Breast epithelium (tissue), 4 donors: ENCODE measurements at regions of chr3 and their contacts with region 1.

Region 1: GRCh38 chr3:133384331-133385027 is 15.4 kb upstream of the BFSP2 start:
- DNase-seq: peak; percentile 42 to 61
- H3K4me3 ChIP-seq: peak overlapping the region in 1 of 3 donors; percentile 17
- H3K27ac ChIP-seq: no peak overlapping the region
- H3K4me1 ChIP-seq: no peaks in the 10 kb centered on the region
- H3K27me3 ChIP-seq: no peaks in the 10 kb centered on the region
- CTCF ChIP-seq: peak in 2 of 3 donors; percentile 68 to 84
- POLR2A ChIP-seq: no peak

Region 2: GRCh38 chr3:133362539-133362938 is 21.9 kb before region 1 on chr3:
- intact Hi-C with region 1: no loop called
- DNase-seq: no peak
- H3K4me3 ChIP-seq: no peak overlapping the region
- H3K27ac ChIP-seq: no peak overlapping the region
- H3K4me1 ChIP-seq: no peaks in the 10 kb centered on the region
- H3K27me3 ChIP-seq: no peaks in the 10 kb centered on the region
- CTCF ChIP-seq: no peak
- POLR2A ChIP-seq: no peak

Region 3: GRCh38 chr3:133401374-133402135 is 17.1 kb after region 1 on chr3:
- intact Hi-C with region 1: no loop called
- DNase-seq: no peak
- H3K4me3 ChIP-seq: no peak overlapping the region
- H3K27ac ChIP-seq: no peak overlapping the region
- H3K4me1 ChIP-seq: peaks cover 0 to 4% of the 10 kb centered on the region in 2 donors
- H3K27me3 ChIP-seq: no peaks in the 10 kb centered on the region
- CTCF ChIP-seq: no peak
- POLR2A ChIP-seq: no peak

Region 4: DNA sequence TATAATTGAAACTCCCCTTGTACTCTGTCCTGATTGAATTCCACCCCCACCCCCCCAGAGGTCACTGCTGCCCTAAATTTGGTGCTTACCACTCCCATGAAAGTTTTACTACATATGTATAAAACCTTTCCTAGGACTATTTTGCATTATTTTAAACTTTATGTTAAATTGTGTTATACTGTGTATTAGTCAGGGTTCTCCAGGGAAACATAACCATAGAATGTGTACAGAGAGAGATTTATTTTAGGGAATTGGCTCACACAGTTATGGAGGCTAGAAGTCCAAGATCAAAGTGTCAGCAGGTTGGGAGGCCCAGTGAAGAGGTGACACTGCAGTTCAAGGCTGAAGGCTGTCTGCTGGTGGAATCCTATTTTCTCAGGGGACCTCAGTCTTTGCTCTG is 44.6 kb after region 1 on chr3:
- intact Hi-C with region 1: no loop called
- DNase-seq: no peak
- H3K4me3 ChIP-seq: no peak overlapping the region
- H3K27ac ChIP-seq: no peak overlapping the region
- H3K4me1 ChIP-seq: no peaks in the 10 kb centered on the region
- H3K27me3 ChIP-seq: no peaks in the 10 kb centered on the region
- CTCF ChIP-seq: no peak
- POLR2A ChIP-seq: no peak

Region 5: DNA sequence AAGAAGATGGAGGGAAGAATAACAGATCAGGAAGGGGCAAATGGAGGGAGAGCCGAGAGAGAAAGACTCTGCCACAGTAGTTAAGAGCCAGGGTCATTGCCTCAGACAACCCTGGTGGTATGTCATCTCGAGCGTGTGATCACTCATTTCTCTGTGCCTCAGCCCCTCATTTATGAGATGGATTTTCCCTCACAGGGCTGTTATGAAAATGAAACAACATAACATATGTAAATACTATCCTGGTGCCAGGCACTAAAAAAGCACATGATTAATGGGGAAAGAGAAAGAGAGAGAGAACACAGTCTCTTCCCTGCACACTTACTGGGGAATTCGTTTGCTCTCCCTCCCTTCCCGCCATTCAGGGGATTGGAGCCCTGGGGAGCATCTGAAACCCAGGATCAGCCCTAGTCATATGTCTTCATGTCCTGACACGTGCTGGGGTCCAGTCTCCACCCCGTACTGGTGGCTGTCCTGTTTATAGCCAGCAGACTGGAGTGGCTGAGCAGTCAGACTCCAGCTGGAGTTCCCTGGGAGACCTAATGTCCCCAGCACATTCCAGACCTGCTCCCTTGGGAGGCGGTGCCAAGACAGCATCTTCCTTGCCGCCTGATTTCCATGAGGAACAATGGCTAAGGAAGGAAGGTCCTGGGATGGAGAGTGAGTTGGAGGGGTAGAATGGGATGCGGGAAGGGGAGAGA is 1004.5 kb after region 1 on chr3:
- intact Hi-C with region 1: loop called (anchors 5 kb)
- DNase-seq: no peak
- H3K4me3 ChIP-seq: no peak overlapping the region
- H3K27ac ChIP-seq: no peak overlapping the region
- H3K4me1 ChIP-seq: no peaks in the 10 kb centered on the region
- H3K27me3 ChIP-seq: no peaks in the 10 kb centered on the region
- CTCF ChIP-seq: no peak
- POLR2A ChIP-seq: no peak